ENCODE measurements at regions of chr12 and their contacts with region 1.

Region 1: DNA sequence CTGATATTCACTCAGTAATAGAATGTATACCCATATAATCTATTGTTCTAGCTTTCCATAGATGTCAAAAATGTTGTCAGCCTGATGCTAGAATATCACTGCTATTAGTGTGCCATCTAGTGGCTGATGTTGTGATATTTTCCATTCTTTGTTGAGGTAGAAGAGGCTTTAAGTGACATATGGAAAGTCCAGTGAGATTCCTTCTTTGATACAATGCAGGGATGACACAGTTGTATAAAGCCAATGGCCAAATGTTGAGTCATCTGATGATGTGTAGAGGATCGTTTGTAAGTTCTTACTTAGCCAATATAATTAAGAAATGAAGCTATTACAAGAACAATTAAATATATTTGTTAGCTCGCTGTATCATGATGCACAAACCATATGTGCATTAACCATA is 58.1 kb upstream of the PCED1B start:
- DNase-seq: peak; percentile 68
- H3K4me3 ChIP-seq: no peak overlapping the region
- H3K27ac ChIP-seq: no peak overlapping the region
- H3K27me3 ChIP-seq: no peaks in the 10 kb centered on the region
- CTCF ChIP-seq: peak; percentile 66

Region 2: GRCh38 chr12:46661110-46661845 is 360.0 kb before region 1 on chr12:
- CTCF ChIA-PET with region 1: interaction called, 15 read pairs
- POLR2A ChIA-PET with region 1: no interaction called
- DNase-seq: peak; percentile 85
- H3K4me3 ChIP-seq: no peak overlapping the region
- H3K27ac ChIP-seq: peak overlapping the region; percentile 71
- H3K27me3 ChIP-seq: no peaks in the 10 kb centered on the region
- CTCF ChIP-seq: peak; percentile 92

Region 3: DNA sequence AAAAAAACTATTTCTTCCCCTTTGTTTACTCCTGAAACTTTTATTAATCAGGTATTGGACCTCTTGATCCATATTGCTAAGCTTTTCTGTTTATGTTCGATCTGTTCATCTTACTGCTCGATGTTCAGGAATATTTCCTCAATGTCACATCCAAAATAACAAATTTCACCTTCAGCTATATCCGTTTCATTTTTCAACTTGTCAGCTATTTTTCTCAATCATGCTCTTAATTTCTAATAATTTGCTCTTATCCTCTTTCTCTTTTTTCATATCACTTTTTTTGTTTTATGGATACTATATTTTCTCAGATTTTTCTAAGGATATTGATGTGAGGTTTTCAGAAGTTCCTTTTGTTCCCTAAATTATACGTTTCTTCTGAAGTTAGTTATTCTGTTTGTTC is 225.3 kb before region 1 on chr12:
- CTCF ChIA-PET with region 1: no interaction called
- POLR2A ChIA-PET with region 1: no interaction called
- DNase-seq: no peak
- H3K4me3 ChIP-seq: no peak overlapping the region
- H3K27ac ChIP-seq: no peak overlapping the region
- H3K27me3 ChIP-seq: no peaks in the 10 kb centered on the region
- CTCF ChIP-seq: no peak

Region 4: GRCh38 chr12:46808955-46809697 is 212.2 kb before region 1 on chr12:
- CTCF ChIA-PET with region 1: no interaction called
- POLR2A ChIA-PET with region 1: no interaction called
- DNase-seq: no peak
- H3K4me3 ChIP-seq: no peak overlapping the region
- H3K27ac ChIP-seq: no peak overlapping the region
- H3K27me3 ChIP-seq: no peaks in the 10 kb centered on the region
- CTCF ChIP-seq: no peak

Region 5: GRCh38 chr12:46944088-46944487 is 77.2 kb before region 1 on chr12:
- CTCF ChIA-PET with region 1: interaction called, 12 read pairs
- POLR2A ChIA-PET with region 1: no interaction called
- DNase-seq: no peak
- H3K4me3 ChIP-seq: no peak overlapping the region
- H3K27ac ChIP-seq: no peak overlapping the region
- H3K27me3 ChIP-seq: no peaks in the 10 kb centered on the region
- CTCF ChIP-seq: peak; percentile 43

Region 6: DNA sequence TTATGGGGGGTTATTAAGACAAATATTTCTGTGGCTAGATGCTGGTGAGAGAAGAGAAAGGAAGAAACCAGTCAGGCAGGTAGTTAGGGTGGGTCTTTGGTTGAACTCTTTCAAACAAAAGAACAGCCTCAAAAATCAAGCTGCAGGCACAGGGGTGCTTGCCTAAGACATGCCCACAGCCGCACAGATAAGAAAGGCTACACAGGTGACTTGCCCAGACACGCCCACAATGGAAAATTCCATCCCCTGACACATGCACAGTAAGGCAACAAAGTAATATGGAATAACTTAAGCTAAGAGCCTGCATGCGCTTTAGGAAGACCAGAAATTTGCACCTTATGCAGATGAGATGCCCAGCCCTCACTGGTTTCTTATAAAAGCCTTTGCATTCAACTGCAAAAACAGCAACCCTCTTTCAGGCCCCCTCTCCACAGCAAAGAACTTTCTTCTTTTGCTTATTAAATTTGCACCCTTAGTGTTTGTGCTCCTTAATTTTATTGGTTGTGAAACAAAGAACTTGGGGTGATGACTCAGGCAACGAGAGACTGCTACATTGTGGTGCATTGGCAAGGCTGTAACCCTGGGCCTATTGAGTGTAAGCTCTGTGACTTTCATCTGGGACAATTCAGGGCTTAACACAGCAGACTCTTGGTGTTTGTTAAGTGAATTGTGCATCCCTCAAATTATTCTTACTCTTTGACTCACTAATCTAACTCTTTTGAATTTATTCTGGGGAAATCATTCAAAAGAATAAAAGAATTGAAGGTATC is 535.1 kb after region 1 on chr12:
- CTCF ChIA-PET with region 1: no interaction called
- POLR2A ChIA-PET with region 1: no interaction called
- DNase-seq: no peak
- H3K4me3 ChIP-seq: no peak overlapping the region
- H3K27ac ChIP-seq: no peak overlapping the region
- H3K27me3 ChIP-seq: peaks cover 12% of the 10 kb centered on the region
- CTCF ChIP-seq: no peak

Measured in AG04450 (cell line).